ENCODE measurements at regions of chr12 and their contacts with region 1.

Region 1: GRCh38 chr12:1779783-1780182 is 40.6 kb upstream of the LRTM2 start:
- DNase-seq: no peak
- H3K4me3 ChIP-seq: no peak overlapping the region
- H3K4me3 Mint-ChIP-seq: no peak overlapping the region
- H3K27ac Mint-ChIP-seq: no peak overlapping the region
- H3K4me1 ChIP-seq: peaks cover 39% of the 10 kb centered on the region
- H3K4me1 Mint-ChIP-seq: peaks cover 36% of the 10 kb centered on the region
- H3K27me3 ChIP-seq: no peaks in the 10 kb centered on the region
- H3K27me3 Mint-ChIP-seq: no peaks in the 10 kb centered on the region
- CTCF ChIP-seq: no peak

Region 2: DNA sequence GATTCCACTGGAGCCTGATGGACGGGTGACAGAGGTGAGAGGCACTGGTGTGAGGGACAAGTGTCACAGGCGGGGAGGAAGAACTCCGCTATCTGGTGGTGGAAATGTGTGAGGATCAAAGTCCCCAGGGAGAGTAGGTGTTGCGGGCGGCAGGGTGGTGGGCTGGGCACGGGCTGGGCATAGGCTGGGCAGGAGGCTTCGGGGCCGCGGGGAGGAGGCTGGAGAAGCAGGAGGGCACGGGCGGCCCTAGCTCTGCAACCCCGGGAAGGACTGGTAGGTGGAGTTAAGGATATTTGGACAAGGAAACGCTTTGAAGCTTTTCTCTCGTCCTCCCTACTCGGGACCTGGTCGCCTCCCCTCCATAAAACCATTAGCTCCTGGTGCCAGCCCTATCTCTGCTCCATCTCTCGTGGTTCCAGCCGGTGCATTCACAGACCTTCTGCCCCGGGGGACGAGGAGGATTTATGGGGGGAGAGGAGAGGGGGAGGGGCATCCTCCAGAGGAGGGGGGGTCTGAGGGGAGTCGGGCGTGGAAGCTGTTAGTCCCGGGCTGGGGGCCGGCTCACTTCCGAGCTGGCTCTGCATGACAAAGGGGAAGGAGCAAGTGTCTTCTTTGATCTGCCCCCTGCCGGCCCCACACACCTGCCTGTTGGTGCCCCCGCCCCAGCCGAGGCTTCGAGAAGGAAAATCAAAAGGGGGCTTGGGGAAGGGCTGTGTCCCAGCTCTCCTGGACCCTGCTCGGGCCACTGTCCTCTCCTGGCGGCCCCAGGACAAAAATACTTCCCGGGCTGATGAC is 150.2 kb before region 1 on chr12:
- CTCF ChIA-PET with region 1: interaction called, 13 read pairs
- POLR2A ChIA-PET with region 1: no interaction called
- intact Hi-C with region 1: no loop called
- DNase-seq: peak; percentile 65 to 67
- H3K4me3 ChIP-seq: peak overlapping the region; percentile 38
- H3K4me3 Mint-ChIP-seq: peak overlapping the region; percentile 97
- H3K27ac Mint-ChIP-seq: peak overlapping the region; percentile 80
- H3K4me1 ChIP-seq: peaks cover 23% of the 10 kb centered on the region
- H3K4me1 Mint-ChIP-seq: peaks cover 31% of the 10 kb centered on the region
- H3K27me3 ChIP-seq: no peaks in the 10 kb centered on the region
- H3K27me3 Mint-ChIP-seq: no peaks in the 10 kb centered on the region
- CTCF ChIP-seq: peak; percentile 50 to 61

Region 3: DNA sequence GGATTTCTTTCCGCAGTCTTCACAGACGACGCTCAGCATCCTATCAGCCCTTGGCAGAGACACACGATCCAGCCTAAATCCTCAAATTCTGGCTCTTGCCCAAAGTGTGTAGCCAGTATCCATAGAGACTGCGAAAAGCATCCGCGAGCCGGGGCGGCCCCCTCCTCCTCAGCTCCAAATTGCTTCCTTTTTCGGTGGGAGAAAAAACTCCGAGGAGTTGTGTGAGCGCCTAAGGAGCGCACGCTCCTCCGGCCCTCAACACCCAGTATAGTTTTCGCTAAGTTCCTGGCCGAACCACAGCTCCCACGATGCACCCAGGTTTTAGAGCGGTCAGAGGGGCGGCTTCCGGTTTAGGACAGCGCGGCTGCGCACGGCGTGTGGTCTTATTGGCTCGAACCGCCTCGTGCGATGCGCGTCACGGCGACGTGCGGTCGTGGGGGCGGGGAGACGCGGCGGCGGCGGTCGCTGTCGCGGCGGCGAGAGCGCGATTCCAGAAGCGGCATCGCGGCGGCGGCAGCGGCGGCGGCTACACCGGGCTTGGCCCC is 89.1 kb before region 1 on chr12 and contains the start of gene ADIPOR2:
- CTCF ChIA-PET with region 1: no interaction called
- POLR2A ChIA-PET with region 1: interaction called, 13 read pairs
- intact Hi-C with region 1: no loop called
- DNase-seq: peak; percentile 98 to 99
- H3K4me3 ChIP-seq: peak within 1 kb of the TSS; percentile 76
- H3K4me3 Mint-ChIP-seq: peak within 1 kb of the TSS; percentile 81
- H3K27ac Mint-ChIP-seq: peak within 1 kb of the TSS; percentile 85
- H3K4me1 ChIP-seq: peaks cover 27% of the 10 kb centered on the region
- H3K4me1 Mint-ChIP-seq: peaks cover 12% of the 10 kb centered on the region
- H3K27me3 ChIP-seq: no peaks in the 10 kb centered on the region
- H3K27me3 Mint-ChIP-seq: no peaks in the 10 kb centered on the region
- CTCF ChIP-seq: no peak
- total RNA-seq, gene ADIPOR2: 119 and 125 TPM in 2 replicates

Region 4: DNA sequence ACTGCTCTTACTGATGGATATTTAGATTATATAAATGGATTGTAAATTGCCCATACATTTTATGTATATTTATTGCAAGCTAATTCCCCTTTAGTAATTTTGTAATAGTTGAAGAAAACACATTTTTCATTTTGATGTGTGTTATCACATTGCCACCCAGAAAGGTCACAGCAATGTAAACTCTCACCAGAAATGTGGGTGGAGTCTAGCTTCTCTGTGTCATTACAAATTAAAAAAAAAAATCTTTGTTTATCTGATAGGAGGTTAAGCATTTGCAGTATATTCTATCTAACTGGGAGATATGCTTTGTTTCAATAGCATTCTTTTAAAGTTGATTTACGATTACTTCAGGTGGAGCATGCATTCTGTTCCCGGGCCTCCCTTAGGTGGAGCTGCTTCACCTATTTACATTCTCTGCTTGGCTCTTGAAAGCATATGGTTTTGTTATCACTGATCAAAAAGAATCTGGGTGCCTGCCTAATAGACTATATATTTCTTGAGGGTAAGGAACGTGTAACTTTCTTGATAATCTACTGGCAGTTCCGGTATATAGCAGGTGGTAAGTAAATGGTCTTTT is 81.1 kb before region 1 on chr12:
- CTCF ChIA-PET with region 1: interaction called, 4 read pairs
- POLR2A ChIA-PET with region 1: no interaction called
- intact Hi-C with region 1: loop called (anchors 2 kb)
- DNase-seq: peak; percentile 69 to 74
- H3K4me3 ChIP-seq: no peak overlapping the region
- H3K4me3 Mint-ChIP-seq: no peak overlapping the region
- H3K27ac Mint-ChIP-seq: peak overlapping the region; percentile 26
- H3K4me1 ChIP-seq: peaks cover 45% of the 10 kb centered on the region
- H3K4me1 Mint-ChIP-seq: peaks cover 25% of the 10 kb centered on the region
- H3K27me3 ChIP-seq: no peaks in the 10 kb centered on the region
- H3K27me3 Mint-ChIP-seq: no peaks in the 10 kb centered on the region
- CTCF ChIP-seq: peak in 1 of 2 experiments; percentile 46

Region 5: GRCh38 chr12:1740161-1740948 is 39.4 kb before region 1 on chr12:
- CTCF ChIA-PET with region 1: interaction called, 3 read pairs
- POLR2A ChIA-PET with region 1: interaction called, 3 read pairs
- intact Hi-C with region 1: loop called (anchors 1 kb)
- DNase-seq: no peak
- H3K4me3 ChIP-seq: no peak overlapping the region
- H3K4me3 Mint-ChIP-seq: peak overlapping the region; percentile 7
- H3K27ac Mint-ChIP-seq: peak overlapping the region; percentile 71
- H3K4me1 ChIP-seq: peaks cover 56% of the 10 kb centered on the region
- H3K4me1 Mint-ChIP-seq: peaks cover 44% of the 10 kb centered on the region
- H3K27me3 ChIP-seq: no peaks in the 10 kb centered on the region
- H3K27me3 Mint-ChIP-seq: no peaks in the 10 kb centered on the region
- CTCF ChIP-seq: no peak

Region 6: DNA sequence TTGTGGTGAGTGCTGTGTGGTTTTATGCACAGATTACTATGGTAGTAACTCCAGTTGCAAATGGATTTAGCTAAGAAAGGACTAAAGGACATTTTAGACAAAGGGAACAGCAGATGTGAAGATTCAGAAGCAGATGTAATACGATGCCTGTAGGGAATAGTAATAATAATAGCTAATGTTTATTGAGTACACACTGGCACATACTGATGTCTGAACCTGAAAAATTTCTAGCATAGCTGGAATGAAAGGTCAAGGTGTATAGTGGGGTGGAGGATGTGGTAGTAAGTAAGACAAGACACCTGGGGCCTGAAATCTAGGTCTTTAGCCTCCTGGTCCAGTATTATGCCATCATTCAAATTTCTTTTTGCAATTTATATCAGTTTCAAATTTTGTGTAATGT is 13.7 kb before region 1 on chr12:
- CTCF ChIA-PET with region 1: interaction called, 5 read pairs
- POLR2A ChIA-PET with region 1: interaction called, 3 read pairs
- intact Hi-C with region 1: loop called (anchors 1 kb)
- DNase-seq: peak in 1 of 2 experiments; percentile 60
- H3K4me3 ChIP-seq: no peak overlapping the region
- H3K4me3 Mint-ChIP-seq: peak overlapping the region; percentile 11
- H3K27ac Mint-ChIP-seq: peak overlapping the region; percentile 58
- H3K4me1 ChIP-seq: peaks cover 59% of the 10 kb centered on the region
- H3K4me1 Mint-ChIP-seq: peaks cover 56% of the 10 kb centered on the region
- H3K27me3 ChIP-seq: no peaks in the 10 kb centered on the region
- H3K27me3 Mint-ChIP-seq: no peaks in the 10 kb centered on the region
- CTCF ChIP-seq: no peak

Region 7: GRCh38 chr12:1907652-1908611 is 128.1 kb after region 1 on chr12:
- CTCF ChIA-PET with region 1: no interaction called
- POLR2A ChIA-PET with region 1: no interaction called
- intact Hi-C with region 1: no loop called
- DNase-seq: peak; percentile 72 to 76
- H3K4me3 ChIP-seq: peak overlapping the region; percentile 28
- H3K4me3 Mint-ChIP-seq: peak overlapping the region; percentile 61
- H3K27ac Mint-ChIP-seq: no peak overlapping the region
- H3K4me1 ChIP-seq: no peaks in the 10 kb centered on the region
- H3K4me1 Mint-ChIP-seq: no peaks in the 10 kb centered on the region
- H3K27me3 ChIP-seq: no peaks in the 10 kb centered on the region
- H3K27me3 Mint-ChIP-seq: no peaks in the 10 kb centered on the region
- CTCF ChIP-seq: no peak